AG04449 (cell line): ENCODE measurements at regions of chr20 and their contacts with region 1.

Region 1: GRCh38 chr20:62302341-62303058 is at the start of gene ADRM1:
- DNase-seq: peak; percentile 69
- H3K4me3 ChIP-seq: peak within 1 kb of the TSS; percentile 81
- CTCF ChIP-seq: peak; percentile 98

Region 2: GRCh38 chr20:62285722-62286121 is 16.8 kb before region 1 on chr20:
- CTCF ChIA-PET with region 1: interaction called, 20 read pairs
- POLR2A ChIA-PET with region 1: no interaction called
- DNase-seq: no peak
- H3K4me3 ChIP-seq: no peak overlapping the region
- CTCF ChIP-seq: no peak

Region 3: GRCh38 chr20:62368976-62369814 is 66.7 kb after region 1 on chr20:
- CTCF ChIA-PET with region 1: interaction called, 37 read pairs
- POLR2A ChIA-PET with region 1: no interaction called
- DNase-seq: no peak
- H3K4me3 ChIP-seq: no peak overlapping the region; the same call in 1 of the 2 replicates
- CTCF ChIP-seq: peak; percentile 53

Region 4: GRCh38 chr20:62376112-62377063 is 73.9 kb after region 1 on chr20:
- CTCF ChIA-PET with region 1: interaction called, 115 read pairs
- POLR2A ChIA-PET with region 1: no interaction called
- DNase-seq: no peak
- H3K4me3 ChIP-seq: no peak overlapping the region
- CTCF ChIP-seq: peak; percentile 63

Region 5: DNA sequence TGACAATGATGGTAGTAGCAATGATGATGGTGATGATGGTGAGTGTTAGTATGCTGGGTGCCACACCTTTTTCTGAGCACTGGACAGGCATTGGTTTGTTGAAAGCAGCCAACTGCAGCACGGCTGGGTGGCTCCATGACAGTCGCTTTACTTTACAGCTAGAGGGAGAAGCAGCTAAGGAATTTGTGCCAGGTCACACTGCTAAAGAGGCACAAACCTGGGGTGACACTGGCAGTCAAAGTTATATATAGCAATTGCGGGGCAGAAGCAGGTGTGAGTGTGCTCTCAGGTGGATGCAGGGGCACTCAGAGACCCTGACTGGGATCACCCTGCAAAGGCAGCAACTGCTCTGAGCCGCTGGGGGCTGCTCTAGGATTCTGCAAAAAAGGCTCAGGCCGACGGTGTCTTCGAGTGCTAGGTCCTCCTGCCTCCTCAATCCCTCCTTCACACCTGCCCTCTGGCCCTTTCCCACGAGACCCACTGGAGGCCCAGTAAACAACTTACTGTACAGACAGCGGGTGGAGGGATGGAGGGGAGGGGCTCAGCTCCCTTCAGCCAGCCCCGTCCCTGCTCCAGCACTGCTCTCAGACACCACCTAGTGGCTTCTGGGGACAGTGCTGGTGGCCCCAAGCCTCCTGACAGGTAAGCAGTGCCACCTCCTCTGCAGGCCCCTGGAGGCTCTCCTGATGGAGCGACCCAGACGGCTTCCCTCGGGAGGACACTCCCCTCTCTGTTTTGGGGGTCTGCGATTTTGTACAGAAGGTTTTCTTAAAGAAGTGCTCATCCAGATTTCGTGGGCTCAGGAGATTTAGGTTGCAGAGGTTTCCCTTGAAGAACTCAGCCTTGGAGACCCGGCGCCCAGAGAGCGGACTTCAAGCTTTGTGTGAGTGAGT is 80.1 kb after region 1 on chr20:
- CTCF ChIA-PET with region 1: interaction called, 115 read pairs
- POLR2A ChIA-PET with region 1: interaction called, 3 read pairs
- DNase-seq: no peak
- H3K4me3 ChIP-seq: no peak overlapping the region
- CTCF ChIP-seq: peak; percentile 96